ENCODE measurements at regions of chr1 and their contacts with region 1.

Region 1: DNA sequence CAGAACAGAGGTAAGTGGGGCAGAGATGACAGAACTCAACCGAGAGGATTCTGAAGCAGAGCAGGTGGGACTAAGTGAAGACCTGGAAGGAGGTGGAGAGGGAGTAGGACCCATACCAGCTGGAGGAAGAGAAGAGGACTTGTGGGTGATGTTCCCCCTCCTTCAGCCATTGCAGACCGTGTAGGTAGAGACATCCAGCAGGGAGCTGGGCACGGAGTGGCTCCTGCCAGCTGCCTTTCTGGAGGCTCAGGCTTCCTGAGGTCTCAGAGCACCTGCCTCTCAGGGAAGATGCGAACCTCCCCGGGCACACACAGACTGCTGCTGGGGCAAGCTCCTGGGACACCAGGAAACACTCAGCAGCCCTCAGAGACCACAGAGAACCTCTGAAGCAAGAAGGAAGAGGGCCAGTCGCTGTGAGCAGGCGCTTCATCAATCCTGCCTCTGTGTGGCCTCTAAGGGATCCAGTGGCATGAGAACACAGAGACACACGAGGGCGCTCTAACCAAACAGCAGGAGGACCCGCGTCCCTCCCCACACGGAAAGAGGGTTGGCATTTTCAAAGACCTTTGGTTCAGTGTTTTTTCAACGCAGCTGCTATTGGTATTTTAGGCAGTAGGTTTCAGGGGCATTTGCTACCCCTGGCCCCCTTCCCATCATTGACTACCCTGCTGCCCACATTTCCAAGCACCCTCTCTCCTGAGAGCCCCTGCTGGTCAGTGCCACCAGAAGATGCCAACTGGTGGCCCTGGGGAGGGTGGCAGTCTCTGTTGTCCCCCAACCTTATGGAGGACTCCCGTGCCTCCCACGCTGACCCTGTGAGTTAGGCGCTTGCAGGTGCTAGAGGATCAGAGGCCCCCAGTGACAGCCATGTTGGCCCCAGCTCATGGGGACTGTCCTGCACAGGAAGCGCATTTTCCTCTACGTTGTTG is 89.6 kb upstream of the EDN2 start:
- DNase-seq: peak; percentile 65 to 97 (median 86)

Region 2: DNA sequence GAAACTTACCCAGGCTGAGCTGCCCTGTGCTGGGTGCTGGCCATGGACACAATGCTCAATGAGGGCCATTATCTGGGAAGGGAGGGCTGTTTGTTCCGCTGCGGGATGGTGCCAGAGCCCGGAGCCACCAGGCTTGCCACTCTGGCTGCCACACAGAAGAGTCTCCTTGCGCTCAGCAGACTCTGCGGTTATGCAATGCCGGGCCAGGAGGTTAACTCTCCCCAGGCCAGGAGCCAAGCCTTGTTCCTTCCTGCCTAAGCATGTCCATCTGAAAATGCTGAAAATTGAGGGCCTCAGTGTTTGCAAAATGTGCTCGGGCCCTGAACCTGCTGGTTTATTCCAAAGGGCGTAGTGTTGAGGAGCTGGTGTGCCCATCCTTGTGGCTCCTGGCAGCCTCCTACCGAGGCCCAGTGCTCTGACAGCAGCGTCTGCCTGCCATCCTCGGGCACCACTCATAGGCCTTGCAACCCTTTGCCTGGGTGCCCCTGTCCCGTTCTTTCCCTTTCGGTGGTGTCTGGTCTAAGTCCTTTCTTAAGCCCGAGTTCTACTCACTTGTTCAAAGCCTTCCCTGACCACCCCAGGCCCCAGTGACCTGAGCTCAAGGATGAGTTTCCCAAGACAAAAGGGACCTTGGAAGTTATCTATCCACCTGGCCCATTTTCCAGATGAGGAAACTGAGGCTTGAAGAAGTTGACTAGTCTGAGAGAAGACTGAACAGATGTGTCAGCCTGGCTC is 44.2 kb after region 1 on chr1:
- intact Hi-C with region 1: loop called (anchors 5 kb)
- DNase-seq: peak; percentile 81 to 98 (median 87)

Region 3: DNA sequence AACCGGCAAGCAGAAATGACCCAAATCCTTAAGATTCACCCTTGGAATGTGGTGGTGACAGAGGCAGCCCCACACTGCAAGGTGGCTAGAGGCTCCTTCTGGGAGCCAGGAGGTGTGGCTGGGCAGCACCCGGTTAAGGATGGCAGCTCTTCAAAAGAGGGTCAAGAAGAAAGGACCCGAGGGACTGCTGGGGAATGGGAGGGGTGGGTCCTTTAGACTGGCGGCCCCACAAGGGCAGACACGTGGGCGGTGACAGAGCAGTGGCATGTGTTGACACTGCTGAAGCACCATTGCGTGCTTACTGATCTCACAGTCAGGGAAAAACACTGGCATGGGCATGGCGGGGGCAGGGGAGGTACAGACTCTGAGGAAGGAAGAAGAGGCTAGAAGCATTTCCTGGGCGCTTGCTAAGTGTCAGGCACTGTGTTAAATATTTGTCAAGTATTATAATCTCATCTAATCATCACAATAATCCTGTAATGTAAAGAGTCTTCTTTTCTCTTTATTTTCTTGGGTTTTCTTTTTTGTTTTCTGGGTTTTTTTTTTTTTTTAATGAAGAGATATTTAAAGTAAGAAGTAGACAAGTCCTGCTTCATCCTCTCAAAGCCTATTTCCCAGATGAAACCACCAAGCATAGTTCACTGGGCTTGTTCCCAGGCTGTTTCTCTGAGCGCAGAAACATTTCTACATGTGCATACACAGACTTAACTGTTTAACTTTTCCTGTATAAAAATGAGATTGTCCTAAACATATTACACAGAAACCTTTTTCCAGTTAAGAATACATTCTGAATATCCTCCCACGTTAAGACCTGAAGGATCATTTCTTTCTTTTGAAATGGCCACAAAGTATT is 76.2 kb after region 1 on chr1:
- intact Hi-C with region 1: loop called (anchors 10 kb)
- DNase-seq: peak in 1 of 10 donors; percentile 88

Region 4: DNA sequence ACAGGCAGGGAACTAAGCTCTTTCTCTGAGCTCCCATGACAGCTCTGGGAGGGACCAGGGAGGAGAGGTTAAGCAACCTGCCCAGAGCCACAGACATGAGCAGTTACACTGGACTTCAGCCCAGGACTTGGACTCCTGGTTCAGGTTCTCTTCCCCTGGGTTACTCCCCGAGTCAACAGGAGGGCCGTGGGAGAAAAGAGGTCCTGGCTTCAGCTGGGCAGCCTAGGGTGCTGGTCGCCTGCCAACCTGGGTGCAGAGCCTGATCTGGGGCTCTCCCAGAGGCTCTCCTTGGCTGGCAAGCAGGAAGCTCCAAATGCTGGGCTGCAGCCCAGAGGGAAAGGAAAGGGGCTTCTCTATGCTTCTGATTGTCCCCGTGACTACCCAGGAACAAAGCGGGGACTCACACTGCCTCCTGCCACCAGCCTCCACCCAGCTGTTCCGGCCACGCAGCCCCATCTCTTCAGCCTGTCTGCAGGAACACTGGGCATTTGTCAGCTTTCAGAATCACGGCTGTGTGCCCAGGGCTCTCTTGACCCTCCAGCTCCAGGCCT is 202.9 kb after region 1 on chr1:
- intact Hi-C with region 1: loop called (anchors 5 kb)
- DNase-seq: peak; percentile 78 to 99 (median 88)

Region 5: DNA sequence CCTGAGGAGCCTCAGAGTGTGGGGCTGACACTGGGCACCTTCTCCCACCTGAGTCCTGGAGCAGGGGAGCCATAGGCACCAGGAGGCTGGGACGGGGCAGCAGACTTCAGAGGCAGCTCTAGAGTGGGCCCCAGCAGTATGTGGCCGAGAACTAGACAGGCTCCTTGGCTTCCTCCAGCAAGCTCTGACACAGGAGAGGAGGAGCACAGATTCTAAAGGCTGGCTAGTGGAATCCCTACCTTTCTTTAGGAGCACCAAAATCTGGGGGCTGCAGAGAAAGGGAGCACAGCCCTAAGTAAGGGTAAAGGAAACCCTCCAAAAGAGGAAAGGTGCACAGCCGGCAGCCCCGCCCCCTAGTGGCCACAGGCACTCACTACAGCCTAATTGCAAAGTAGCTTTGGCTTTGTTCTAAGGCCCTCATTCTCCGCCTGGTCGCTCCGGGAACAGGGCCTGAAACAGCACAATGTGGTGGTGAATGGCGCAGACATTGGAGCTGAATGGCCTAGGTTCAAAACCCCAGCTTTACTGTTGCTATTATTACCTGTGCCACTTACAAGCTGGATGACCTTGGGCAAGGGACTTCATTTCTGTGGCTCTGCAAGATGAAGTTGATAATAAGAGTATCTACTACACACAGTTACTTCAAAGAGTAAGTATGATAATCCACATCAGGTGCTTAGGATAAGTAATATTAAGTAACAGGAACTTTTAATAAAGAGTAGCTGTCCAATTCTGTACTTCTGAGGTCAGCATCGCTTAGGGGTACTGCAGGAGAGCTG is 599.3 kb after region 1 on chr1:
- intact Hi-C with region 1: loop called (anchors 1 kb)
- DNase-seq: peak; percentile 48 to 96 (median 76)